Naive thymus-derived CD4-positive, alpha-beta T cell (primary cell): ENCODE measurements at regions of chr2 and their contacts with region 1.

Region 1: GRCh38 chr2:69914170-69914960 is 544 bp upstream of the MXD1 start:
- DNase-seq: peak in 7 of 9 donors; percentile 97 to 100 (median 100)
- ATAC-seq: peak; percentile 94
- H3K4me3 ChIP-seq: peak overlapping the region; percentile 98
- H3K4me3 Mint-ChIP-seq: peak overlapping the region; percentile 70 to 92 (median 82)
- H3K27ac ChIP-seq: peak overlapping the region; percentile 91
- H3K27ac Mint-ChIP-seq: peak overlapping the region; percentile 60 to 96 (median 89)
- H3K4me1 ChIP-seq: peaks cover 4 to 8% of the 10 kb centered on the region in 2 donors
- H3K4me1 Mint-ChIP-seq: peaks cover 8 to 39% (median 34%) of the 10 kb centered on the region in 7 donors
- H3K27me3 ChIP-seq: no peaks in the 10 kb centered on the region
- H3K27me3 Mint-ChIP-seq: no peaks in the 10 kb centered on the region

Region 2: DNA sequence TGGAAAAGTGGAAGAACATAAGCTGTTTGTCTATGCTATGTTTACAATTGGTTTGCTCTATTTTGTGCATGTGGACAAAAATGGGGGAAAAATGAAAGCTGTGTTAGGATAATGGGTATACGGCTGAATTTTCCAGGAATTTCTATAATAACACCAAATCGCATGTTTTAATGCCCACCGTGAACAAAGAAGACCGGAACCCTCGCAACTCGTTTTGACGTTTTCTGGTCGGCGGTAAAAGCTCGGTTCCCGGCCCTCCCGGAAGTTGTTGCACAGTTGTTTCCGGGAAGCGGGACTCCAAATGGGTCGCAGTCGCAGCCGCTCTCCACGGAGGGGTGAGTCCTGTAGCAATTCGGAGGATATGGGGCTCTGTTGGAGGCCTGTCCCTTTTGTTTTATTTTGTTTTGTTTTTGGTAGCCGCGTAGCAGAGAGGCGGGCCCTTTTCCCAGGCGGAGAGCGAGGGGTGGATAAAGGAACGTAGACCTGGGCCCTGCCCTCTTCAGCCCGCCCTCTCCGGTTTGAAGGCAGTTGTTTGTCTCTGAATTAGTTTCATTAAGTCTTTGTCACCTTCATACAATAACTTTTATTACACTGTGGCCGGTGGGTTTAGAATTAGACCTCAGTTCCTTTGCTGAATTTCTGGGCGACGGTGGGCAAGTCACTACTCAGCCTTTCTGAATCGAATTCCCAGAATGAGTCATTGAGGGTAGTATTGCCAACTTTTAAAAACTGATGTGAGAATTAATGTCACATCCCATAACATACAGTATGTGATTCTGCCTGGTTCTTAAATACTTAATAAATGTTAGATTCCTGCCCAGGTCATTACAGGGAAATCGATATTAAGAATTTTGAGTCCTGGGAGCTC is 20.4 kb before region 1 on chr2 and contains the start of gene SNRNP27:
- CTCF ChIA-PET with region 1: no interaction called
- POLR2A ChIA-PET with region 1: interaction called, 32 read pairs
- intact Hi-C with region 1: loop called in 1 of 2 experiments (anchors 2 kb)
- DNase-seq: peak; percentile 62 to 84 (median 77)
- ATAC-seq: peak; percentile 90
- H3K4me3 ChIP-seq: peak within 1 kb of the TSS; percentile 67
- H3K4me3 Mint-ChIP-seq: peak within 1 kb of the TSS; percentile 90 to 100 (median 99)
- H3K27ac ChIP-seq: peak within 1 kb of the TSS; percentile 91
- H3K27ac Mint-ChIP-seq: peak within 1 kb of the TSS; percentile 93 to 100 (median 99)
- H3K4me1 ChIP-seq: peaks cover 12 to 17% of the 10 kb centered on the region in 2 donors
- H3K4me1 Mint-ChIP-seq: peaks cover 12 to 56% (median 43%) of the 10 kb centered on the region in 7 donors
- H3K27me3 ChIP-seq: no peaks in the 10 kb centered on the region
- H3K27me3 Mint-ChIP-seq: no peaks in the 10 kb centered on the region
- total RNA-seq, gene SNRNP27: 32.5 to 56.0 (median 51.5) TPM

Region 3: DNA sequence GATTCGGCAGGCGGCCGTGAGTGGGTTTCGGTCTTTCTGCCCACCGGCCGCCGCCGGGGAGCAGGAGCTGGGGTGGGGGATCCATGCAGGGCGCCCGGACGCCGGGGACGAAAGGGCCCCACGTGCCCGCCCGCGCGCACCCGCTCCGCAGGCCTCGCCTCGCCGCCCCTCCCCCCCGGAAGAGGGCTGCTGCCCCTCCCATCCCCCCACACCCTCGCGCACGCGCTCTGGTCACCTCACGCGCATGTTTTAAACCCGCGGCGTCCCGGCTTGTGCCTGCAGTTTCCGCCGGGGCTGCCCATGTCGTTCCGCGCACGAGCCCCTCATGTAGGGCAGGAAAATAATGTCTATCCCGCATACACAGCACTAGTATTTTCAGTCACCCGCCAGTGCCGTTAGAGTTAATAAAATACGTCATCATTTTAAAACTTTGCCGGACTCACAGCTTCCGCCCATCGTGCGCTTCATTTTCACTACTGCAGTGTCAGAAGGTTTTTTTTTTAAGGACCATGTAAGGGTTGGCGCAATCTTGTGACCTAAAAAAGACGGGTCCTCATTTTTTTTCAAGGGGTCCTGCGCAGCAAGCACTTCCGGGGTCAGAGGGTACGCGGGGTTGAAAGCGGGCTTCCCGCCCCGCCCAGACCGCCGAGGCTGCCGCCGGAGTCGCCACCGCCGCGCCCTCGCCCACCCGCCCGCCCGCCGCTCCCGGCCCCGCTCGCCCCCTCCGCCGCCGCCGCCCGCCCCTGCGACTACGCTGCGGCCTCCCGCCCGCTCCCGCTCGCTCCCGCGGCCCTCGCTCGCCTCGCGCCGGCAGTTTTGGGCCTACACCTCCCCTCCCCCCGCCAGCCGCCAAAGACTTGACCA is 172.7 kb after region 1 on chr2 and contains the start of gene PCBP1:
- CTCF ChIA-PET with region 1: interaction called, 4 read pairs
- POLR2A ChIA-PET with region 1: interaction called, 172 read pairs
- intact Hi-C with region 1: loop called (anchors 1 kb)
- DNase-seq: peak; percentile 94 to 100 (median 98)
- ATAC-seq: peak; percentile 83
- H3K4me3 ChIP-seq: peak within 1 kb of the TSS; percentile 86
- H3K4me3 Mint-ChIP-seq: peak within 1 kb of the TSS; percentile 91 to 98 (median 97)
- H3K27ac ChIP-seq: peak within 1 kb of the TSS; percentile 100
- H3K27ac Mint-ChIP-seq: peak within 1 kb of the TSS; percentile 99 to 100 (median 100)
- H3K4me1 ChIP-seq: peaks cover 55 to 59% of the 10 kb centered on the region in 2 donors
- H3K4me1 Mint-ChIP-seq: peaks cover 40 to 67% (median 59%) of the 10 kb centered on the region in 7 donors
- H3K27me3 ChIP-seq: no peaks in the 10 kb centered on the region
- H3K27me3 Mint-ChIP-seq: peaks cover 0 to 4% (median 0%) of the 10 kb centered on the region in 5 donors
- total RNA-seq, gene PCBP1: 257 to 487 (median 368) TPM

Region 4: GRCh38 chr2:70132244-70133126 is 218.1 kb after region 1 on chr2:
- CTCF ChIA-PET with region 1: interaction called, 4 read pairs
- POLR2A ChIA-PET with region 1: interaction called, 46 read pairs
- intact Hi-C with region 1: no loop called
- DNase-seq: peak in 7 of 9 donors; percentile 63 to 77 (median 68)
- ATAC-seq: peak; percentile 66
- H3K4me3 ChIP-seq: peak overlapping the region; percentile 53
- H3K4me3 Mint-ChIP-seq: peak overlapping the region; percentile 81 to 94 (median 90)
- H3K27ac ChIP-seq: peak overlapping the region; percentile 85
- H3K27ac Mint-ChIP-seq: peak overlapping the region; percentile 95 to 99 (median 97)
- H3K4me1 ChIP-seq: peaks cover 66 to 74% of the 10 kb centered on the region in 2 donors
- H3K4me1 Mint-ChIP-seq: peaks cover 58 to 88% (median 79%) of the 10 kb centered on the region in 7 donors
- H3K27me3 ChIP-seq: no peaks in the 10 kb centered on the region
- H3K27me3 Mint-ChIP-seq: no peaks in the 10 kb centered on the region

Region 5: DNA sequence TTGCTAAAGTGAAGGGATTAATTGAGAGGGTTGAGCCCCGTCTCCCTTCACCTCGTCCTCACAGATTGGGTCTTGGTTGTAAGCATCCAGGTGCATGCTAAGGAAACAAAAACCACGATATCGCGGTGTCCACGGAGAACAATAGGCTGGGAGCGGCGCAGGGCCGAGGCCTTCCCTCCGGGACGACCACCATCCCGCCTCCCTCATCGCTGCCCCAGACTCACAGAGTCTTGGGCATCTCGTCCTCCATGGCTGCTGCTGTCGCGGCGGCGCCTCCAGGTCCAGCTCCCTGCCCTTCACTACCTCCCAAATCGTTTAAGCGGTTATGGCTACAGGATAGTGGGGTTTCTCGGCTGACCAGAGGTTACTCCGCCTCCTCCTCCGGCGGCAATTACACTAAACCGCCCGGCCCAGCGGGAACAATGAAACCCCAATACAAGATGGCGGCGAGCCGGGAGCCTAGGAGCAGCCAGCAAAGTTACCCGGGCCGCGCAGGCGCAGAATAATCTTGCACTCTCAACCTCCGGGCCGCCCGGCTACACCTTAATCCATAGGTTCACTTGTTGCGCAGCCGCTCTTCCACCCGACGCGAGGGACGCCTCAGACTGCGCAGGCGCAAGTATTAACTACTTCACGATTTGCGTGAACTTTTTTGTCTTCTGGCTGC is 333.9 kb after region 1 on chr2 and contains the start of gene TIA1:
- CTCF ChIA-PET with region 1: interaction called, 3 read pairs
- POLR2A ChIA-PET with region 1: interaction called, 3 read pairs
- intact Hi-C with region 1: loop called (anchors 1 kb)
- DNase-seq: peak; percentile 94 to 99 (median 98)
- ATAC-seq: peak; percentile 98
- H3K4me3 ChIP-seq: peak within 1 kb of the TSS; percentile 87
- H3K4me3 Mint-ChIP-seq: peak within 1 kb of the TSS; percentile 83 to 99 (median 95)
- H3K27ac ChIP-seq: peak within 1 kb of the TSS; percentile 95
- H3K27ac Mint-ChIP-seq: peak within 1 kb of the TSS; percentile 91 to 100 (median 97)
- H3K4me1 ChIP-seq: peaks cover 13 to 24% of the 10 kb centered on the region in 2 donors
- H3K4me1 Mint-ChIP-seq: peaks cover 23 to 48% (median 40%) of the 10 kb centered on the region in 7 donors
- H3K27me3 ChIP-seq: no peaks in the 10 kb centered on the region
- H3K27me3 Mint-ChIP-seq: peaks cover 0 to 4% (median 0%) of the 10 kb centered on the region in 5 donors
- total RNA-seq, gene TIA1: 80.9 to 244 (median 163) TPM

Region 6: GRCh38 chr2:70616168-70616694 is 701.9 kb after region 1 on chr2:
- CTCF ChIA-PET with region 1: interaction called, 3 read pairs
- POLR2A ChIA-PET with region 1: no interaction called
- intact Hi-C with region 1: loop called in 1 of 2 experiments (anchors 1 kb)
- DNase-seq: no peak
- ATAC-seq: no peak
- H3K4me3 ChIP-seq: no peak overlapping the region
- H3K4me3 Mint-ChIP-seq: no peak overlapping the region
- H3K27ac ChIP-seq: no peak overlapping the region
- H3K27ac Mint-ChIP-seq: no peak overlapping the region
- H3K4me1 ChIP-seq: no peaks in the 10 kb centered on the region
- H3K4me1 Mint-ChIP-seq: peaks cover 0 to 2% (median 0%) of the 10 kb centered on the region in 7 donors
- H3K27me3 ChIP-seq: no peaks in the 10 kb centered on the region
- H3K27me3 Mint-ChIP-seq: peaks cover 0 to 17% (median 0%) of the 10 kb centered on the region in 5 donors